MCF 10A (cell line): ENCODE measurements at regions of chr6 and their contacts with region 1.

Region 1: GRCh38 chr6:136289579-136290409 is at the start of gene BCLAF1:
- DNase-seq: peak; percentile 98
- H3K4me3 Mint-ChIP-seq: peak within 1 kb of the TSS; percentile 96
- H3K27ac Mint-ChIP-seq: peak within 1 kb of the TSS; percentile 100
- H3K4me1 Mint-ChIP-seq: peaks cover 17% of the 10 kb centered on the region
- H3K27me3 Mint-ChIP-seq: no peaks in the 10 kb centered on the region
- CTCF ChIP-seq: no peak
- total RNA-seq, gene BCLAF1: 175 and 178 TPM in 2 replicates

Region 2: GRCh38 chr6:135497412-135498269 is 792.2 kb before region 1 on chr6 and contains the start of gene AHI1:
- CTCF ChIA-PET with region 1: no interaction called
- POLR2A ChIA-PET with region 1: interaction called, 71 read pairs
- intact Hi-C with region 1: loop called (anchors 2 kb)
- DNase-seq: peak; percentile 93
- H3K4me3 Mint-ChIP-seq: no peak within 1 kb of the TSS
- H3K27ac Mint-ChIP-seq: no peak within 1 kb of the TSS
- H3K4me1 Mint-ChIP-seq: peaks cover 7% of the 10 kb centered on the region
- H3K27me3 Mint-ChIP-seq: no peaks in the 10 kb centered on the region
- CTCF ChIP-seq: no peak
- total RNA-seq, gene AHI1: 23.5 and 26.5 TPM in 2 replicates

Region 3: DNA sequence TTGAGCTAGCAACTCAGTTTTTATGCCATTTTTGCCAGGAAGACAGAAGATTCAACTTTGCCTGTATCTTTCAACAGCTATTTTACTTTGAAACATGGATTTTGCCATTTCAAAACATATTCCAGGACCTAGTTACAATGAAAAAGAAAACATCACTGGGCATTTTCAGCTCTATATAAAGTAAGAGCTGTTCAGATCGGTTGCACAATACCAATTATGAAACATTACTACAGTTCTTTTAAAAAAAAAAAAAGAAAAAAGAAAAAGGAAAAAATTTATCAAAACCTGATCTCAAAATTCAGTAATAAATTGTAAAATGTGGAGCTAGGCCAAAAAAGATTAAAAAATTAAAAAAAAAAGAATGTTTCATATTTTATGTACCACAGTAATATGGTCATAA is 15.7 kb before region 1 on chr6:
- CTCF ChIA-PET with region 1: interaction called, 4 read pairs
- POLR2A ChIA-PET with region 1: interaction called, 12 read pairs
- intact Hi-C with region 1: no loop called
- DNase-seq: no peak
- H3K4me3 Mint-ChIP-seq: no peak overlapping the region
- H3K27ac Mint-ChIP-seq: no peak overlapping the region
- H3K4me1 Mint-ChIP-seq: no peaks in the 10 kb centered on the region
- H3K27me3 Mint-ChIP-seq: no peaks in the 10 kb centered on the region
- CTCF ChIP-seq: no peak

Region 4: DNA sequence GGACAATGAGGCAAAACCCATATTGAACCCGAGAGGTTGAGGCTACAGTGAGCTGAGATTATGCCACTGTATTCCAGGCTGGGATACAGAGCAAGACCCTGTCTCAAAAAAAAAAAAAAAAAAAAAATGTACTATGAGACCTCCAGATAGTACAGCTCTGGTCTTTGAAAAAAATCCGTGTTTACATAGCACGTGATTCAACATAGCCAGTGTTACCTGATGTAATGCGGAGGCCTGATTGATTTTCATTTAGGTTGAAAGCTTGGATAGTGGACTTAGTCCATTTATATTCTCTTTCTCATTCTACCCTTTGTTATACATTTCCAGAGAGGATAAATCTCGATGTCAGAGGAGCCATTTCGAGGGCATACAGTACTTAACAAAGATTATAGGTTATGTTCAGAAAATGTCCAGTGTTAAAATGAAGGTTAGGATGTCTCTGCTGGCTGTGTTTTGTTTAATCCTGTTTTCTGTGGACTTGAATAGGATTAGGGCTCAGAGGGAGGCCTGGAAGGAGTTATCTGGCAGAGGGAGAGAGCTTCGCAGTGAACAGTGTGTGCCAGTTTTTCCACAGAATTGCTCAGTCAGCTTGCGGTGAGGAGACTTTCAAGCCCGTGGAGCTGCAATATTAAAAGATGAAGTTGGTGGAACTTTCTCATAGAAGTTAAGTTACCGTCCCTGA is 33.8 kb after region 1 on chr6:
- CTCF ChIA-PET with region 1: interaction called, 11 read pairs
- POLR2A ChIA-PET with region 1: interaction called, 19 read pairs
- intact Hi-C with region 1: no loop called
- DNase-seq: no peak
- H3K4me3 Mint-ChIP-seq: no peak overlapping the region
- H3K27ac Mint-ChIP-seq: no peak overlapping the region
- H3K4me1 Mint-ChIP-seq: no peaks in the 10 kb centered on the region
- H3K27me3 Mint-ChIP-seq: no peaks in the 10 kb centered on the region
- CTCF ChIP-seq: no peak

Region 5: GRCh38 chr6:136550330-136551071 is 260.7 kb after region 1 on chr6 and contains the start of gene MAP7:
- CTCF ChIA-PET with region 1: interaction called, 7 read pairs
- POLR2A ChIA-PET with region 1: interaction called, 46 read pairs
- intact Hi-C with region 1: loop called (anchors 1 kb)
- DNase-seq: peak; percentile 86
- H3K4me3 Mint-ChIP-seq: peak within 1 kb of the TSS; percentile 72
- H3K27ac Mint-ChIP-seq: peak within 1 kb of the TSS; percentile 57
- H3K4me1 Mint-ChIP-seq: peaks cover 8% of the 10 kb centered on the region
- H3K27me3 Mint-ChIP-seq: no peaks in the 10 kb centered on the region
- CTCF ChIP-seq: peak; percentile 97
- total RNA-seq, gene MAP7: 15.4 and 17.2 TPM in 2 replicates